Ascending aorta (tissue), 2 donors: ENCODE measurements at regions of chr19 and their contacts with region 1.

Region 1: GRCh38 chr19:12777217-12778016 is 2.1 kb upstream of the HOOK2 start:
- DNase-seq: peak; percentile 43 to 89
- H3K4me3 ChIP-seq: peak overlapping the region; percentile 68 to 70
- H3K27ac ChIP-seq: peak overlapping the region; percentile 93 to 96
- H3K4me1 ChIP-seq: peaks cover 21 to 49% of the 10 kb centered on the region in 2 donors
- H3K27me3 ChIP-seq: no peaks in the 10 kb centered on the region
- CTCF ChIP-seq: peak; percentile 97 to 98 (median 98)

Region 2: DNA sequence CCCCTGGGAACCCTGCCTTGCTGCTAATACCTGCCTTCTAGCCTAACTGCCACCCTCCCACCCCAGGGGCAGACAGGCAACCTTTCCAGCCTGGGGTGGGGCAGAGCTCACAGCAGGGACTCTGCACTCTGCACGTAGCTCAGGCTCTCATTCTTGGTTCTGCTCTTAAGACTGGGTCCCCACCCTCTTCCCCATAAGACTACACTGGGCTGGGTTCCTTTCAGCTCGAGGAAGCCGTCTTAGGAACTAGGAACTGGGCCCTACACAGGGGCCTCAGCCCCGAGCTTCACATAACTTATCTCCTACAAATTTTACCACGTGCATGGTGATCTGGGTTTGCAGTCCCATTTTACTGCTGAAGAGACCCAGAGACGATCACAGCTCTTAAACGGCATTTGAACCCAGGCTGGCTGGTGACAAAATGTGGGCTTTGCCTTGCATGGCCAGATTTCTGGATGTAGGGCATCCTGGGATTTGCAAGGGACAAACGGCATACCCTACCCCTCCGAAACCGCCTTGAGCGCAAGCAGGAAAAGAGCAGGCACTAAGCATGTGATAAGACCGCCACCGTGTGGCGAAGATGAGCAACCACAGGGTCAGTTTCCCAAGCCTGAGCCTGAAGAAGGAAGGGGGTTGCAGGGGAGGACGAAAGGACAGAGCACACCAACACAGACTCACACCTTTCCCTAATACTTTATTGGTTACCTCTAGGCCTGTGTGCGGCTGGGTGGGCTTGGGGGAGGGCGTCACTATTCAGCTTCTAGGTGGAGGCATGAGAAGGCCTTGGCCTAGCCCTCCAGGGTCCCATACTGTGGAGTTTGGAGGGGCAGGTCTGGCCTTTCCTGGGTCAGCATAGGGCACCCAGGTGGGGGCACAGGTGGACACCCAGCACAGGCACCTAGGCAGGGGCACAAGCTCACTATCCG is 19.0 kb after region 1 on chr19:
- intact Hi-C with region 1: loop called (anchors 1 kb)
- DNase-seq: peak in 1 of 2 donors; percentile 86
- H3K4me3 ChIP-seq: no peak overlapping the region
- H3K27ac ChIP-seq: peak overlapping the region; percentile 41 to 65
- H3K4me1 ChIP-seq: peaks cover 10% of the 10 kb centered on the region in 2 donors
- H3K27me3 ChIP-seq: no peaks in the 10 kb centered on the region
- CTCF ChIP-seq: peak; percentile 93 to 97 (median 94)

Region 3: GRCh38 chr19:12806239-12807081 is 29.0 kb after region 1 on chr19 and contains the start of gene RNASEH2A:
- intact Hi-C with region 1: loop called (anchors 5 kb)
- DNase-seq: peak in 1 of 2 donors; percentile 94
- H3K4me3 ChIP-seq: peak within 1 kb of the TSS; percentile 61 to 71
- H3K27ac ChIP-seq: peak within 1 kb of the TSS; percentile 6 to 31
- H3K4me1 ChIP-seq: peaks cover 3 to 8% of the 10 kb centered on the region in 2 donors
- H3K27me3 ChIP-seq: no peaks in the 10 kb centered on the region
- CTCF ChIP-seq: peak in 1 of 3 experiments; percentile 6
- total RNA-seq, gene RNASEH2A: 3.4 TPM